ENCODE measurements at regions of chrX and their contacts with region 1.

Region 1: GRCh38 chrX:54999717-55000598 is at the start of gene APEX2:
- DNase-seq: peak; percentile 74 to 94 (median 86)
- ATAC-seq: peak; percentile 94
- H3K4me3 ChIP-seq: peak within 1 kb of the TSS; percentile 70 to 71
- H3K4me3 Mint-ChIP-seq: peak within 1 kb of the TSS; percentile 92
- H3K27ac ChIP-seq: peak within 1 kb of the TSS; percentile 97 to 98
- H3K27ac Mint-ChIP-seq: peak within 1 kb of the TSS; percentile 96
- H3K4me1 ChIP-seq: peaks cover 12% of the 10 kb centered on the region
- H3K4me1 Mint-ChIP-seq: peaks cover 35% of the 10 kb centered on the region
- H3K27me3 ChIP-seq: no peaks in the 10 kb centered on the region
- H3K27me3 Mint-ChIP-seq: no peaks in the 10 kb centered on the region
- CTCF ChIP-seq: no peak
- total RNA-seq, gene APEX2: 6.6 to 7.5 TPM

Region 2: DNA sequence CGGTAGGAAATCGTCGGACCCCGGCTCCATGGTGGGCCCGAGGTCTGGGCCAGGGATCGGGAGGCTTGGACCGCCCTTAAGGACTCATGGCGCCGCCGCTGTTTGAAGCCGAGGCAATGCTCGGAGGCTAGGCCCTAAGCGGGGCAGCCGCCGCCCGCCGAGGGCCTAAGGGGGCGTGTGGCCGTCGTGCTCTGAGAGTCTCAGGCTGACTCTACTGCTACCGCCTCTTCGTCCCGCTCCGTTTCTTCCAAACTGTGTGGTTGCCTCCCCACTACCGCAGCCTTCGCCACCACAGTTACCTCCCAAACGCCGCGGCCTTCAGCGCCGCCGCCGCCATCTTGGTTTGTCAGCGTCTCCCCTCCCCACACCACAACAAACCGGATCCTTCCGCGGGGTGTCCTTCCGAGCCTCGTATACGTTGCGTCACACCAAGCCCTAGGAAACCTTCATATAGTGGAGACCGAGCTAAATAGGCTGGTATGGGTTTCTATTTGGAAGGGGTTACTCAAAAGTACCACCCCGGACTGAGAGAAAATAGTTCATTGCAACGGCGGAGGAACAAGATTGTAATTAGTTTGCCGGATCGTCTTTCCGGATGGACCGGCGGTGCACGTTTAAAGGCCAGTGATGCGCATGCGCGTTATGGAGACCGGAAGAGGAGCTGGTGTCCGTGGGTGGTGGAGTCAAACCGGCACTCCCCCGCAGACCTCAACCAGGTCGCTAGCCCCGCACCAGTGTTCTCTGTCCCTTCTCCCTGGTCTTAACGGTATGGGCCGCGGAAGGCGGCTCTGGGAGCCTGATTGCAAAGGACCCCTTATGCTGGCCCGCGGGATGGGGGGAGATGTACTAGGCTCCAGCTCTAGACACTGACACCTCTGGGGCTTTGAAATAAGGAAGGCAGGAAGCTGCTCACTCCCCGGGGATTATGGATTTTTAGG is 1774.8 kb before region 1 on chrX and contains the start of gene KDM5C:
- CTCF ChIA-PET with region 1: no interaction called
- POLR2A ChIA-PET with region 1: no interaction called
- intact Hi-C with region 1: loop called in 1 of 2 experiments (anchors 5 kb)
- DNase-seq: peak; percentile 60 to 96 (median 89)
- ATAC-seq: peak; percentile 70
- H3K4me3 ChIP-seq: peak within 1 kb of the TSS; percentile 81 to 97
- H3K4me3 Mint-ChIP-seq: peak within 1 kb of the TSS; percentile 97
- H3K27ac ChIP-seq: peak within 1 kb of the TSS; percentile 92 to 98
- H3K27ac Mint-ChIP-seq: peak within 1 kb of the TSS; percentile 99
- H3K4me1 ChIP-seq: peaks cover 36% of the 10 kb centered on the region
- H3K4me1 Mint-ChIP-seq: peaks cover 39% of the 10 kb centered on the region
- H3K27me3 ChIP-seq: no peaks in the 10 kb centered on the region
- H3K27me3 Mint-ChIP-seq: no peaks in the 10 kb centered on the region
- CTCF ChIP-seq: no peak
- total RNA-seq, gene KDM5C: 276 to 295 TPM

Region 3: GRCh38 chrX:54182864-54183608 is 816.9 kb before region 1 on chrX and contains the start of gene FAM120C:
- CTCF ChIA-PET with region 1: no interaction called
- POLR2A ChIA-PET with region 1: interaction called, 5 read pairs
- intact Hi-C with region 1: loop called in 1 of 2 experiments (anchors 2 kb)
- DNase-seq: peak; percentile 26 to 83 (median 59)
- ATAC-seq: peak; percentile 70
- H3K4me3 ChIP-seq: peak within 1 kb of the TSS; percentile 60 to 72
- H3K4me3 Mint-ChIP-seq: peak within 1 kb of the TSS; percentile 78
- H3K27ac ChIP-seq: peak within 1 kb of the TSS; percentile 75 to 83
- H3K27ac Mint-ChIP-seq: peak within 1 kb of the TSS; percentile 88
- H3K4me1 ChIP-seq: peaks cover 38% of the 10 kb centered on the region
- H3K4me1 Mint-ChIP-seq: peaks cover 43% of the 10 kb centered on the region
- H3K27me3 ChIP-seq: no peaks in the 10 kb centered on the region
- H3K27me3 Mint-ChIP-seq: no peaks in the 10 kb centered on the region
- CTCF ChIP-seq: no peak
- total RNA-seq, gene FAM120C: 10.9 to 11.1 TPM

Region 4: DNA sequence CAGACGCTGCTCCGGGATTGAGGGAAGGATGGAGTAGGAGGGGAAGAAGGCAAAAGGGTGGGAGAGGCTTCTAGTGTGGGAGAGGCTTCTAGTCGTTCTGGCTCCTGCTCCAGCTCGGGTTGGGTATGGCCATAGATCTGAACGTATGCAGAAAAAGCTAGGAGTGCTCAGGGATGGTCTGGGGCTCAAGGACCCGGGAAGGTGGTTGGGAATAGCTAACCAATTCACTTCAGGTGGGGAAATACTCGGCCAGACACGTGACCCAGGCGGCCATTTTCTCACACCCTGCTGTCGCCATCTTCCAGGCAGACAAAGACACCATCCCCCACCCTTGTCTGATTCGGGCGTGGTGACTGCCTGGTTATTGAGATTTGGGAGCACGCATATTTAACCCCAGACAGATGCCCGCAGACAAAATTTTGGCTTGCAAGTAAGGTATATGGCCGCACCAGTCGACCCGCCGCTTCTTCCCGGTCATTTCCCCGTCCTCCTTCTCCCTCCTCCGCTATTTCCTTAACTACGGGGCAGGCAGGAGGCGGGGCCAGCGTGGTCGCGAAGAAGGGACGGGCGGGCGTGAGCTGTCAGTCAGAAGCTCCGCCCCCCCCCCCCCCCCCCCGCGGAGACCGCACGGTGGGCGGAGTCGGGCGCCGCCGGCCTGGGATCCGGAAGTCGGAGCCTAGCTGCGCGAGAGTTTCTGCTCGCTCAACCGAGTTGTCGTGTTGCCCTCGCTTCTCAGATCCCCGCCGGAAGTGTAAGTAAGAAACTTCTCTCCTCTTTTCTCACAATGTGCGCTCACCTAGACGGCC is 470.2 kb before region 1 on chrX and contains the start of gene GNL3L:
- CTCF ChIA-PET with region 1: no interaction called
- POLR2A ChIA-PET with region 1: no interaction called
- intact Hi-C with region 1: loop called in 1 of 2 experiments (anchors 10 kb)
- DNase-seq: peak; percentile 55 to 89 (median 78)
- ATAC-seq: peak; percentile 83
- H3K4me3 ChIP-seq: peak within 1 kb of the TSS; percentile 85 to 95
- H3K4me3 Mint-ChIP-seq: peak within 1 kb of the TSS; percentile 97
- H3K27ac ChIP-seq: peak within 1 kb of the TSS; percentile 79 to 94
- H3K27ac Mint-ChIP-seq: peak within 1 kb of the TSS; percentile 97
- H3K4me1 ChIP-seq: peaks cover 22% of the 10 kb centered on the region
- H3K4me1 Mint-ChIP-seq: peaks cover 40% of the 10 kb centered on the region
- H3K27me3 ChIP-seq: no peaks in the 10 kb centered on the region
- H3K27me3 Mint-ChIP-seq: no peaks in the 10 kb centered on the region
- CTCF ChIP-seq: no peak
- total RNA-seq, gene GNL3L: 20.9 to 24.0 TPM

Region 5: GRCh38 chrX:54808605-54809483 is 191.1 kb before region 1 on chrX:
- CTCF ChIA-PET with region 1: no interaction called
- POLR2A ChIA-PET with region 1: interaction called, 6 read pairs
- intact Hi-C with region 1: loop called (anchors 1 to 5 kb)
- DNase-seq: peak; percentile 73 to 96 (median 85)
- ATAC-seq: peak; percentile 71
- H3K4me3 ChIP-seq: peak overlapping the region; percentile 92 to 96
- H3K4me3 Mint-ChIP-seq: peak overlapping the region; percentile 93
- H3K27ac ChIP-seq: peak overlapping the region; percentile 92
- H3K27ac Mint-ChIP-seq: peak overlapping the region; percentile 95
- H3K4me1 ChIP-seq: peaks cover 13% of the 10 kb centered on the region
- H3K4me1 Mint-ChIP-seq: peaks cover 21% of the 10 kb centered on the region
- H3K27me3 ChIP-seq: no peaks in the 10 kb centered on the region
- H3K27me3 Mint-ChIP-seq: no peaks in the 10 kb centered on the region
- CTCF ChIP-seq: no peak

Region 6: GRCh38 chrX:54921427-54922021 is 78.4 kb before region 1 on chrX:
- CTCF ChIA-PET with region 1: no interaction called
- POLR2A ChIA-PET with region 1: no interaction called
- intact Hi-C with region 1: loop called in 1 of 2 experiments (anchors 5 kb)
- DNase-seq: peak in 8 of 9 experiments; percentile 26 to 73 (median 52)
- ATAC-seq: peak; percentile 77
- H3K4me3 ChIP-seq: peak overlapping the region; percentile 57 to 62
- H3K4me3 Mint-ChIP-seq: peak overlapping the region; percentile 85
- H3K27ac ChIP-seq: no peak overlapping the region
- H3K27ac Mint-ChIP-seq: no peak overlapping the region
- H3K4me1 ChIP-seq: no peaks in the 10 kb centered on the region
- H3K4me1 Mint-ChIP-seq: peaks cover 15% of the 10 kb centered on the region
- H3K27me3 ChIP-seq: no peaks in the 10 kb centered on the region
- H3K27me3 Mint-ChIP-seq: no peaks in the 10 kb centered on the region
- CTCF ChIP-seq: no peak

Region 7: GRCh38 chrX:55025870-55026542 is 26.0 kb after region 1 on chrX:
- CTCF ChIA-PET with region 1: no interaction called
- POLR2A ChIA-PET with region 1: no interaction called
- intact Hi-C with region 1: no loop called
- DNase-seq: no peak
- ATAC-seq: no peak
- H3K4me3 ChIP-seq: no peak overlapping the region
- H3K4me3 Mint-ChIP-seq: no peak overlapping the region
- H3K27ac ChIP-seq: no peak overlapping the region
- H3K27ac Mint-ChIP-seq: no peak overlapping the region
- H3K4me1 ChIP-seq: no peaks in the 10 kb centered on the region
- H3K4me1 Mint-ChIP-seq: no peaks in the 10 kb centered on the region
- H3K27me3 ChIP-seq: no peaks in the 10 kb centered on the region
- H3K27me3 Mint-ChIP-seq: no peaks in the 10 kb centered on the region
- CTCF ChIP-seq: no peak

Region 8: GRCh38 chrX:55074851-55075467 is 75.0 kb after region 1 on chrX and contains the start of gene PAGE2B:
- CTCF ChIA-PET with region 1: no interaction called
- POLR2A ChIA-PET with region 1: no interaction called
- intact Hi-C with region 1: no loop called
- DNase-seq: no peak
- ATAC-seq: no peak
- H3K4me3 ChIP-seq: no peak within 1 kb of the TSS
- H3K4me3 Mint-ChIP-seq: no peak within 1 kb of the TSS
- H3K27ac ChIP-seq: no peak within 1 kb of the TSS
- H3K27ac Mint-ChIP-seq: no peak within 1 kb of the TSS
- H3K4me1 ChIP-seq: no peaks in the 10 kb centered on the region
- H3K4me1 Mint-ChIP-seq: no peaks in the 10 kb centered on the region
- H3K27me3 ChIP-seq: no peaks in the 10 kb centered on the region
- H3K27me3 Mint-ChIP-seq: peaks cover 4% of the 10 kb centered on the region
- CTCF ChIP-seq: no peak
- total RNA-seq, gene PAGE2B: not detected